ENCODE measurements at regions of chr10 and their contacts with region 1.

Region 1: GRCh38 chr10:131477457-131478121 is 166.1 kb upstream of the TCERG1L start:
- DNase-seq: no peak
- H3K4me3 ChIP-seq: no peak overlapping the region
- H3K27ac ChIP-seq: no peak overlapping the region
- H3K4me1 ChIP-seq: no peaks in the 10 kb centered on the region
- H3K27me3 ChIP-seq: no peaks in the 10 kb centered on the region
- CTCF ChIP-seq: no peak
- EP300 ChIP-seq: no peak
- POLR2A ChIP-seq: no peak

Region 2: GRCh38 chr10:131250454-131251145 is 227.0 kb before region 1 on chr10:
- in situ Hi-C with region 1: no loop called
- intact Hi-C with region 1: no loop called
- DNase-seq: no peak
- H3K4me3 ChIP-seq: no peak overlapping the region
- H3K27ac ChIP-seq: no peak overlapping the region
- H3K4me1 ChIP-seq: no peaks in the 10 kb centered on the region
- H3K27me3 ChIP-seq: no peaks in the 10 kb centered on the region
- CTCF ChIP-seq: no peak
- EP300 ChIP-seq: no peak
- POLR2A ChIP-seq: no peak

Region 3: GRCh38 chr10:131396121-131397050 is 81.2 kb before region 1 on chr10:
- in situ Hi-C with region 1: loop called in 1 of 4 experiments (anchors 25 kb)
- intact Hi-C with region 1: no loop called
- DNase-seq: no peak
- H3K4me3 ChIP-seq: no peak overlapping the region
- H3K27ac ChIP-seq: no peak overlapping the region
- H3K4me1 ChIP-seq: no peaks in the 10 kb centered on the region
- H3K27me3 ChIP-seq: no peaks in the 10 kb centered on the region
- CTCF ChIP-seq: no peak
- EP300 ChIP-seq: no peak
- POLR2A ChIP-seq: no peak

Region 4: GRCh38 chr10:131748831-131749766 is 271.5 kb after region 1 on chr10:
- in situ Hi-C with region 1: no loop called
- intact Hi-C with region 1: no loop called
- DNase-seq: peak; percentile 13
- H3K4me3 ChIP-seq: no peak overlapping the region
- H3K27ac ChIP-seq: no peak overlapping the region
- H3K4me1 ChIP-seq: no peaks in the 10 kb centered on the region
- H3K27me3 ChIP-seq: peaks cover 9% of the 10 kb centered on the region
- CTCF ChIP-seq: no peak
- EP300 ChIP-seq: no peak
- POLR2A ChIP-seq: no peak

Measured in transverse colon (tissue), 4 donors.